ENCODE measurements at regions of chr14 and their contacts with region 1.

Region 1: GRCh38 chr14:23727566-23728335 is 91.6 kb downstream of the DHRS2 start:
- DNase-seq: no peak
- H3K4me3 ChIP-seq: no peak overlapping the region
- H3K27ac ChIP-seq: no peak overlapping the region
- H3K4me1 ChIP-seq: no peaks in the 10 kb centered on the region
- H3K27me3 ChIP-seq: no peaks in the 10 kb centered on the region
- CTCF ChIP-seq: peak in 3 of 4 experiments; percentile 6 to 35 (median 22)
- POLR2A ChIP-seq: no peak

Region 2: DNA sequence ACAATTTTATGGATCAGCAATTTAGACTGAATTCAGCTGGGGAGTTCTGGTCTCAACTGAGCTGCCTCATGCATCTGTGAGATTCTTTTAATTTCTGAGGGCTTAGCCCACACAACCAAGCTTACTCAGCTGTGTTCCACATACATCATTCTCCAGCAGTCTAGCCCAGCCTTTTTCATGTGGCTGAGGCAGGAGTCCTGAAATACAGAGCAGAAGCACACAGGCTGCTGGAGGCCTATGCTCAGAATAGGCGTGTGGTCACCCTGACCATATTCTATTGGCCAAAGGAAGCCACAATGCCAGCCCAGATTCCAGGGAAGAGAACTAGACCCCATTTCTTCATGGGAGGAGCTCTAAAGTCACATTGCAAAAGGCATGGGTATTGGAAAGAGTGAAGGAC is 153.5 kb after region 1 on chr14:
- intact Hi-C with region 1: no loop called
- DNase-seq: no peak
- H3K4me3 ChIP-seq: no peak overlapping the region
- H3K27ac ChIP-seq: no peak overlapping the region
- H3K4me1 ChIP-seq: no peaks in the 10 kb centered on the region
- H3K27me3 ChIP-seq: no peaks in the 10 kb centered on the region
- CTCF ChIP-seq: no peak
- POLR2A ChIP-seq: no peak

Region 3: GRCh38 chr14:23929822-23930294 is 202.1 kb after region 1 on chr14:
- intact Hi-C with region 1: loop called (anchors 10 kb)
- DNase-seq: peak; percentile 67
- H3K4me3 ChIP-seq: no peak overlapping the region
- H3K27ac ChIP-seq: no peak overlapping the region
- H3K4me1 ChIP-seq: no peaks in the 10 kb centered on the region
- H3K27me3 ChIP-seq: no peaks in the 10 kb centered on the region
- CTCF ChIP-seq: peak; percentile 73 to 91 (median 82)
- POLR2A ChIP-seq: no peak